ENCODE measurements at regions of chr12 and their contacts with region 1.

Region 1: DNA sequence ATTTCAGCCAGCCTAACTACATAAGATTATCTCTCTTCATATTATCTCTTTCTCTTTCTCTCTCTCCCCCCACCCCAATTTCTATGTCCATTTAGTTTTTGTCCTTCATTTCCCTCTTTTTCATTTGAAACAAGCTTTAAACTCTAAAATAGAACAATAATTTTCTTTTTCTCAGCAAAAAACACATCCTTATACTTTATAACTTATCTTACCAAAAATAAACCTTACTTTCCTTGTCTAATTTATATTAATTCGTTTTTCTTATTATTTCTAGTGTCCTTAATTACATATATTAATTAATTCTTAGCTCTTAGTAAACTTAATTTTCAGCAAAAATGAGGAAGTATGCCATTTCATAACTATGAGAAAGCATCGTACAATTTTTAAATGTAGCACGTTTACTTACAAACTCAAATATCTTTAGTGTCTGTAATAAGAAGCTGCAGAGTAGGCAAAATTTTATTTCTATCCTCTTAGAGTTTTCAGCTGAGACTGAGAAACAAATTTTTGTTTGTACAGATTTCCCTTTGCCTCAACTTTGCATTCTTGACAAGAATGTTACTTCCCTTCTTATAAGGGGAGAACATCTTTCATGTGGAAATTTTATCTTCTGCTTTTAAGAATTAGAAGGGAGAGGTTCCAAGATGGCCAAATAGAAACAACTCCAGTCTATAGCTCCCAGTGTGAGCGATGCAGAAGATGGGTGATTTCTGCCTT is 65.1 kb upstream of the ST8SIA1 start:
- DNase-seq: no peak
- ATAC-seq: no peak
- H3K4me3 Mint-ChIP-seq: no peak overlapping the region
- H3K27ac Mint-ChIP-seq: no peak overlapping the region
- H3K4me1 Mint-ChIP-seq: peaks cover 31% of the 10 kb centered on the region
- H3K27me3 Mint-ChIP-seq: no peaks in the 10 kb centered on the region
- CTCF ChIP-seq: no peak

Region 2: DNA sequence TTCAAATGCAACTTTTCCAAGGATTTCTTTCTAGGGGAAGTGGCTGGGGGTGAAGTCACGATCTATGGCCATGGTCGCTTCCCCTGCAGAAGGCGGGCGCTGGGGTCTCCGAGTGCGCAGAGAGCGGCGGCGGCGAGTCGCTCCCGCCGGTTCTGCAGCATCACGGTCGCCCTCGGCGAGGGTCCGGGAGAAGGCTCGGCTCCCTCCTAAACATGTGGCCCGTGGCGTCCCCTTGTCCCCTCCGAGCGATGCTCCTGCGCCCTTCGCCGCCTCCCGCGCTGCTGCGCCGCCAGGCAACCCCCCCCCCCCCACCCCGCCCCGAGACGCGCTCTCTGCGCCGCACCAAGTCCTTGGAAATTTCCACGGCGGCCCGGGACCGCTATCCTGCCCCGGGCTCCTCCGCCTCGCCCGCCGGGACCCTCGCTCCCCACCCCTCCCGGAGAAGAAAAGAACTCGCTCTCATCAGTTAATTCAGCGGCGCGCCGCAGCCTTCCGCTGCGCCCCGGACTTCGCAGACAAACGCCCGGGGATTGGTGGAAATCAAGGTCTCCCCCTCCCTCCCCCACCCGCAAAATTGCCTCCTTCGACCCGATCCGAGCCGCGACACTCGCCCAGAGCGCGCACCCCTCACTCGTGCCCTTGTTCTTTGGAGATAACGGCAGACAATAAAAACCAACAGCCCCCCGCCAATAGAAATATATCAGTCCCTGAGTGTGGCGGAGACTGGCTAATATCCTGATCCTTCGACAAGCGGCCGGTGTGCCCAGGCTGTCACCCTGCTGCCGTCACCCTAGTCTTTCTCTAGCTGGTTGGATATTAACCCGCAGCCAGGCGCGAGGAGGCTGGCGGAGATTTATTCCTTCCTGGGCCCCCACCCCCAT is 65.0 kb before region 1 on chr12 and contains the start of gene ST8SIA1:
- CTCF ChIA-PET with region 1: interaction called, 11 read pairs
- POLR2A ChIA-PET with region 1: no interaction called
- intact Hi-C with region 1: no loop called
- DNase-seq: peak; percentile 60
- ATAC-seq: peak; percentile 45
- H3K4me3 Mint-ChIP-seq: peak within 1 kb of the TSS; percentile 84
- H3K27ac Mint-ChIP-seq: peak within 1 kb of the TSS; percentile 80
- H3K4me1 Mint-ChIP-seq: peaks cover 16% of the 10 kb centered on the region
- H3K27me3 Mint-ChIP-seq: peaks cover 38% of the 10 kb centered on the region
- CTCF ChIP-seq: no peak
- total RNA-seq, gene ST8SIA1: 1.5 to 2.5 TPM

Region 3: GRCh38 chr12:22415342-22416309 is 16.0 kb after region 1 on chr12:
- CTCF ChIA-PET with region 1: no interaction called
- POLR2A ChIA-PET with region 1: no interaction called
- intact Hi-C with region 1: no loop called
- DNase-seq: no peak
- ATAC-seq: peak; percentile 31
- H3K4me3 Mint-ChIP-seq: no peak overlapping the region
- H3K27ac Mint-ChIP-seq: peak overlapping the region; percentile 78
- H3K4me1 Mint-ChIP-seq: peaks cover 14% of the 10 kb centered on the region
- H3K27me3 Mint-ChIP-seq: no peaks in the 10 kb centered on the region
- CTCF ChIP-seq: no peak